ENCODE measurements at regions of chr4 and their contacts with region 1.

Region 1: DNA sequence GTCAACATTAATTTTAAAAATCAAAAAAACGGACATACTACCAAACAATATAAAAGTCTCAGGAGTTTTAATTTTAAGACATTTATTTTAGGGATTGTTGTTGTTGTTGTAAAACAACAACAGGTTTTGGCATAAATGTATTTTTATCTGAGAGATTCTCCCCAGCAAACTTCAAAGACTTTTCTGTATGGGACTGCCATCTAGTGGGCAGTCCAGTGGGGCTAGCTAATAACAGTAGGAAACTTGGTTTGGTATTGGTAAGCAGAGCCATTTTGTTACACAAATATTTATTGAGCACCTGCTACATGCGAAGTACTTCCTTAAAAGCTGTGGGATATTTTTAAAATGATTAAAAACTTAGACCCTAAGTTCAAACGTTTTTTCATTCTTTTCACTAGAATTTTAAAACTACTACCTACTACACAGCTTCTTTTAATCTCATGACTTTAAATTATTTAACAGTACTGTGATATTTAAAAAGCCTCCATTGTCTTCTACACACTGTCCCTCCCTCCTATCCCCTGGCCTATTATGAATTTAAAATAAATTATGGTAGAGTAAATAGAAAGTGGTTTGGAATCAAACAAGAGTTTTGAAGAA is 1028.4 kb upstream of the INTU start:
- DNase-seq: peak; percentile 61
- ATAC-seq: peak; percentile 76
- H3K4me3 ChIP-seq: no peak overlapping the region
- H3K27ac ChIP-seq: no peak overlapping the region
- H3K4me1 ChIP-seq: no peaks in the 10 kb centered on the region
- H3K27me3 ChIP-seq: no peaks in the 10 kb centered on the region
- CTCF ChIP-seq: peak; percentile 78
- POLR2A ChIP-seq: no peak
- RAD21 ChIP-seq: peak; percentile 73

Region 2: GRCh38 chr4:125762537-125762936 is 841.8 kb before region 1 on chr4:
- CTCF ChIA-PET with region 1: no interaction called
- POLR2A ChIA-PET with region 1: no interaction called
- dilution Hi-C with region 1: no loop called
- in situ Hi-C with region 1: no loop called
- intact Hi-C with region 1: loop called (anchors 10 kb)
- DNase-seq: no peak
- ATAC-seq: no peak
- H3K4me3 ChIP-seq: no peak overlapping the region
- H3K27ac ChIP-seq: no peak overlapping the region
- H3K4me1 ChIP-seq: no peaks in the 10 kb centered on the region
- H3K27me3 ChIP-seq: no peaks in the 10 kb centered on the region
- CTCF ChIP-seq: no peak
- POLR2A ChIP-seq: no peak
- RAD21 ChIP-seq: no peak

Region 3: GRCh38 chr4:126223784-126224407 is 380.5 kb before region 1 on chr4:
- CTCF ChIA-PET with region 1: no interaction called
- POLR2A ChIA-PET with region 1: no interaction called
- dilution Hi-C with region 1: no loop called
- in situ Hi-C with region 1: no loop called
- intact Hi-C with region 1: loop called (anchors 5 kb)
- DNase-seq: peak; percentile 23
- ATAC-seq: no peak
- H3K4me3 ChIP-seq: no peak overlapping the region
- H3K27ac ChIP-seq: no peak overlapping the region
- H3K4me1 ChIP-seq: no peaks in the 10 kb centered on the region
- H3K27me3 ChIP-seq: no peaks in the 10 kb centered on the region
- CTCF ChIP-seq: peak; percentile 60
- POLR2A ChIP-seq: no peak
- RAD21 ChIP-seq: peak; percentile 35

Region 4: DNA sequence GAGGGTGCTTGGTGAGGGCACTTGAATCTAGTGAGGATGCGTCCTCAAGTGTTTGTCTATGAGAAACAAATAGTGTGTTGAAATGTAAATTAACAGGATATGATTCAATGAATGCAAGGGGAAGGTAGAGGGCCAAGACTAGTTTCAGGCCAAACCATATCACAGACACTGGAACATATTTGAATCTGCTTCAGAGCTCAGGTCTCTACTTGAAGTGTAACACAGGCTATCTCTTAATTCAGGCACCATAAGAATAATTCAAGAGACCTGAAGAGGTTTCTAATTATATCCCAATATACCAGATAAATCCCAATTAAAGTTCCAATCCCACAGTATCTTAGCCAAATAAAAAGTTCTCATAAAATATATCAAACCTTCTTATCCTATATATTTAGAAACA is 881.9 kb after region 1 on chr4:
- CTCF ChIA-PET with region 1: no interaction called
- POLR2A ChIA-PET with region 1: no interaction called
- dilution Hi-C with region 1: no loop called
- in situ Hi-C with region 1: no loop called
- intact Hi-C with region 1: loop called (anchors 10 kb)
- DNase-seq: no peak
- ATAC-seq: no peak
- H3K4me3 ChIP-seq: no peak overlapping the region
- H3K27ac ChIP-seq: no peak overlapping the region
- H3K4me1 ChIP-seq: no peaks in the 10 kb centered on the region
- H3K27me3 ChIP-seq: no peaks in the 10 kb centered on the region
- CTCF ChIP-seq: no peak
- POLR2A ChIP-seq: no peak
- RAD21 ChIP-seq: no peak

Measured in IMR-90 (cell line).